ENCODE measurements at regions of chr16 and their contacts with region 1.

Region 1: GRCh38 chr16:67595033-67595355 is 32.7 kb downstream of the CTCF start:
- DNase-seq: no peak
- ATAC-seq: no peak
- H3K4me3 ChIP-seq: no peak overlapping the region
- H3K4me3 Mint-ChIP-seq: peak overlapping the region in 1 of 10 donors; percentile 1
- H3K27ac ChIP-seq: no peak overlapping the region
- H3K27ac Mint-ChIP-seq: peak overlapping the region in 7 of 9 donors; percentile 5 to 70 (median 56)
- H3K4me1 ChIP-seq: peaks cover 0 to 9% of the 10 kb centered on the region in 2 donors
- H3K4me1 Mint-ChIP-seq: peaks cover 29 to 62% (median 56%) of the 10 kb centered on the region in 7 donors
- H3K27me3 ChIP-seq: no peaks in the 10 kb centered on the region
- H3K27me3 Mint-ChIP-seq: no peaks in the 10 kb centered on the region

Region 2: GRCh38 chr16:67326472-67327309 is 268.3 kb before region 1 on chr16 and contains the starts of genes KCTD19 and LRRC36:
- CTCF ChIA-PET with region 1: no interaction called
- POLR2A ChIA-PET with region 1: no interaction called
- intact Hi-C with region 1: no loop called
- DNase-seq: peak; percentile 5 to 73 (median 17)
- ATAC-seq: peak; percentile 68
- H3K4me3 ChIP-seq: peak within 1 kb of the TSS; percentile 61
- H3K4me3 Mint-ChIP-seq: peak within 1 kb of the TSS; percentile 77 to 94 (median 84)
- H3K27ac ChIP-seq: no peak within 1 kb of the TSS
- H3K27ac Mint-ChIP-seq: peak within 1 kb of the TSS in 4 of 9 donors; percentile 47 to 78 (median 67)
- H3K4me1 ChIP-seq: peaks cover 6 to 11% of the 10 kb centered on the region in 2 donors
- H3K4me1 Mint-ChIP-seq: peaks cover 7 to 17% (median 11%) of the 10 kb centered on the region in 7 donors
- H3K27me3 ChIP-seq: no peaks in the 10 kb centered on the region
- H3K27me3 Mint-ChIP-seq: peaks cover 32 to 57% (median 42%) of the 10 kb centered on the region in 5 donors
- total RNA-seq, gene KCTD19: 0.05 to 0.39 TPM in 2 of 5 experiments, not detected in the others
- total RNA-seq, gene LRRC36: 0.50 to 0.56 TPM in 2 of 5 experiments, not detected in the others

Region 3: DNA sequence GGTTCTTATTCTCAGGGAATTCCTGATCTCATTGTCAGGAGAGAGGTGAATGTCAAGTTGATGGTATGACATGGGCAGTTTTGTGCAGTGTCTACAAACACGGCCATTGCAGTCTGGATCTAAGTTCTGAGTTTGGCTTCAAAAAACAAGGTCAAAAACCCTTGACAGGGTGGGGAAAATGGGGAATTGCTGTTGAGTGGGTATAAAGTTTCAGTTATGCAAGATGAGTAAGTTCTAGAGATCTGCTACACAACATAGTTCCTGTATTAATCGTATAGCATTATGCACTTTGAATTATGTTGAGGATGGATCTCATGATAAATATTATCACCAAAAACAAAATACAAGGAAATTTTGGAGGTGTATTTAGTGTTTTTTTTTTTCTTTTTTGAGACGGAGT is 13.4 kb after region 1 on chr16:
- CTCF ChIA-PET with region 1: interaction called, 3 read pairs
- POLR2A ChIA-PET with region 1: interaction called, 3 read pairs
- intact Hi-C with region 1: loop called in 1 of 2 experiments (anchors 1 kb)
- DNase-seq: no peak
- ATAC-seq: no peak
- H3K4me3 ChIP-seq: no peak overlapping the region
- H3K4me3 Mint-ChIP-seq: no peak overlapping the region
- H3K27ac ChIP-seq: no peak overlapping the region
- H3K27ac Mint-ChIP-seq: peak overlapping the region in 3 of 9 donors; percentile 0 to 51 (median 4)
- H3K4me1 ChIP-seq: peaks cover 0 to 4% of the 10 kb centered on the region in 2 donors
- H3K4me1 Mint-ChIP-seq: peaks cover 13 to 24% (median 21%) of the 10 kb centered on the region in 7 donors
- H3K27me3 ChIP-seq: no peaks in the 10 kb centered on the region
- H3K27me3 Mint-ChIP-seq: no peaks in the 10 kb centered on the region

Measured in naive thymus-derived CD4-positive, alpha-beta T cell (primary cell).